Activated T-helper 2 cell treated with anti-CD3 and anti-CD28 coated beads, Interferon-gamma antibody, Interleukin-2, Interleukin-4, amounts not matched to agents 10 μg/mL and 5 μg/mL and 100 μg/mL, durations not matched to agents 14 hours and 24 hours and 36 hours (primary cell): ENCODE measurements at regions of chr2 and their contacts with region 1.

Region 1: DNA sequence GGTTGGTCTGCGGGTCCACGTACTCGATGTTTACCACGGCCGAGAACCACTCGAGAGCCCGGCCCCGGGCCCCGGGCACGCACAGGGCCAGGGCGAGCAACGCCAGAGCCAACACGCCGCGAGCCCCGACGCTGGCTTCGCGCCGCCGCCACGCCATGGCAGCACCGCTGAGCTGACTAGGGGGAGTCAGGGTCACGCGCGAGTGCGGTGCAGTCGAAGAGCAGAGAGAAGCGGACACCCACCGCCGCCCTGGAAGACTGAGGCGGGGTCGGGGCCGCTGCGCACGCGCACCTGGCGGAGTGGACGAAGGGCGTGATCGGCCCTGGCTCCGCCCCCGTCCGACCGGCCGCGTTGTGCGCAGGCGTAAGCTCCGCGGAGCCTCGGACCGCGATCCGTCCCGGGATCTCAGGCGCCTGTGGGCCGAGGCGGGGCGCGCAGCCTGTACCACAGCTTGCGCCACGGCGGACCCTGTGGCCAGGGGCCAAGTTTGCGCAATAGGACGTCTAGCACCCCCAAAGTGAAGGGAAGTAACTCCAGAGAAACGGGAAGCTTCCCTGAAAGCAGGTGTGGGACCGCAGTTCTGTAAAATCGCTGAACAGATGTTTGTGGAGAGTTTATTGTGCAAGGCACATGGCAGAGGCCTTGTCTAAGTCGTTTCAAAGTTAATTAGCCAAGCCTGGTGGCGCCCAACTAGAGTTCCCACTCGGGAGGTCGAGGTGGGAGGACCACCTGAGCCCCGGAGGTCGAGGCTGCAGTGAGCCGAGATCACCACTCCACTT is at the start of gene RNF149:
- DNase-seq: peak; percentile 88
- H3K4me3 Mint-ChIP-seq: peak within 1 kb of the TSS; percentile 91
- H3K27ac Mint-ChIP-seq: peak within 1 kb of the TSS; percentile 97
- H3K4me1 Mint-ChIP-seq: peaks cover 59% of the 10 kb centered on the region
- H3K27me3 Mint-ChIP-seq: no peaks in the 10 kb centered on the region
- total RNA-seq, gene RNF149: 50.4 and 54.9 TPM in 2 replicates

Region 2: GRCh38 chr2:101001691-101002561 is 306.7 kb before region 1 on chr2 and contains the start of gene RPL31:
- intact Hi-C with region 1: loop called (anchors 5 kb)
- DNase-seq: peak; percentile 94
- H3K4me3 Mint-ChIP-seq: peak within 1 kb of the TSS; percentile 97
- H3K27ac Mint-ChIP-seq: peak within 1 kb of the TSS; percentile 93
- H3K4me1 Mint-ChIP-seq: peaks cover 33% of the 10 kb centered on the region
- H3K27me3 Mint-ChIP-seq: peaks cover 5% of the 10 kb centered on the region
- total RNA-seq, gene RPL31: 1,195 and 1,243 TPM in 2 replicates

Region 3: GRCh38 chr2:101272045-101272784 is 36.4 kb before region 1 on chr2:
- intact Hi-C with region 1: loop called (anchors 1 kb)
- DNase-seq: no peak
- H3K4me3 Mint-ChIP-seq: peak overlapping the region; percentile 30
- H3K27ac Mint-ChIP-seq: peak overlapping the region; percentile 52
- H3K4me1 Mint-ChIP-seq: peaks cover 39% of the 10 kb centered on the region
- H3K27me3 Mint-ChIP-seq: no peaks in the 10 kb centered on the region

Region 4: DNA sequence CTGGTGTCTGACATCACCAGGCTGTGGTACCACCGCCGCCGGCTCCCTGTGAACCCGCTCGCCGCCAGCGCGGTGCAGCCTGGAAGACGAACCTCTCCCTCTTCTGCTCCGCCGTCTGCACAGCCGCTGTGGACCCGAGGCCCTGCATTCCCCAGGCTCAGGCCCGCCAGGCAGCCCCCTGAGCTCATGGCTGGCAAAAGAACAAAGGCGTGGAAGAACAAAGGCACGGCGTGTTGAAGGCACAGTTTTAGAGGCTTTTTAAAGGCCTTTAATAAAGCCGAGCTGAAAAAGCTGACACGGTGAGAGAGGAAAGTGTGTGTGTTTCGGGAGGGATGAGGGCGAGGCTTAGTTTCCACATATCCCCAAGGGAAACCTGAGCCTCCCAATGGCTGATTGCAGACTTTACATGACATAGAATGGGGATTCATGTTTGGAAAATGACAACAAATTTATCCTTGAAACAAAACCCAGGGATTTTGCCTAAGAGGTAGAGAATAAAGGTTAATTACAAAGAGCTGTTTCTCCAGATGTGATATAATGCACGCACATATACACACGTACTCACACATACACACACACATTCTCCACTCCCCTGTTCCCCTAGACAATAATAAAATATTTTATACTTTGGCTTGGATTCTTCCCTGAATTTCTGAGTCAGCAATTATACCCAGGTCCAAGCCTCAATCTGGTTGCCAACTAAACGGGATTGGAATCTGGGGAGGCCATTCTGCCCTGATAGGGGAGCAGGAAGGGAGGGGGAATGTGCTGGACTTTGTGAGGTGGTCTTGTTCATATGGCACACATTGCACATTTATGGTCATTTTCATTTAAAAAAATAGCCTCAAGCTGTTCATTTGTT is 126.6 kb after region 1 on chr2:
- intact Hi-C with region 1: no loop called
- DNase-seq: no peak
- H3K4me3 Mint-ChIP-seq: no peak overlapping the region
- H3K27ac Mint-ChIP-seq: no peak overlapping the region
- H3K4me1 Mint-ChIP-seq: peaks cover 16% of the 10 kb centered on the region
- H3K27me3 Mint-ChIP-seq: no peaks in the 10 kb centered on the region

Region 5: DNA sequence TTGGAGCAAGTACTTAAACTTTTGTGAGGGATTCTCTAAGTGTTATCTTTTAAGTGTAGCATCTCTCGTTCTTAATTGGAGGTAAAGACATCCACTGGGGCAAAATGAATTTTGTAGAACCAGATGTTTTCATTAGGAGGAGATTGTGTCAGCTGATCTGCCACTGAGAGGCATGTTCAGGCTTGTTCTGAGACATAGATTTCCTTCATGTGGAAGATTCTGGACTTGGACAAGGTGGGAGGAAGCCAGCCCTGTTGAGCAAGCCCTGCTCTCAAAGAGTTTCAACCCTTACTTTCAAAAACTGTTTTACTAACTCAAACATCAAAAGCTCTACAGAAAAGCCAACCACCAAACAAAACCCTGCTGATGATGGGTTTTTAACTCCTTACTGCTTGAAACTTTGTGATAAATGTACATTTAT is 395.4 kb after region 1 on chr2:
- intact Hi-C with region 1: loop called (anchors 5 kb)
- DNase-seq: no peak
- H3K4me3 Mint-ChIP-seq: peak overlapping the region; percentile 53
- H3K27ac Mint-ChIP-seq: peak overlapping the region; percentile 77
- H3K4me1 Mint-ChIP-seq: peaks cover 59% of the 10 kb centered on the region
- H3K27me3 Mint-ChIP-seq: no peaks in the 10 kb centered on the region